Activated T-helper 1 cell treated with anti-CD3 and anti-CD28 coated beads, Interleukin-12 subunit alpha, Interleukin-12 subunit beta, Interleukin-2, Interleukin-4 antibody, amounts not matched to agents 30 ng/mL and 10 ng/mL and 1 ng/mL, durations not matched to agents 14 hours and 24 hours and 36 hours (primary cell): ENCODE measurements at regions of chr19 and their contacts with region 1.

Region 1: GRCh38 chr19:4328243-4328990 is 10.2 kb downstream of the STAP2 start:
- DNase-seq: peak; percentile 87
- H3K4me3 Mint-ChIP-seq: peak overlapping the region; percentile 84
- H3K27ac Mint-ChIP-seq: peak overlapping the region; percentile 90
- H3K4me1 Mint-ChIP-seq: peaks cover 15% of the 10 kb centered on the region
- H3K27me3 Mint-ChIP-seq: peaks cover 9% of the 10 kb centered on the region

Region 2: GRCh38 chr19:4294389-4294788 is 34.0 kb before region 1 on chr19:
- intact Hi-C with region 1: no loop called
- DNase-seq: no peak
- H3K4me3 Mint-ChIP-seq: no peak overlapping the region
- H3K27ac Mint-ChIP-seq: no peak overlapping the region
- H3K4me1 Mint-ChIP-seq: peaks cover 13% of the 10 kb centered on the region
- H3K27me3 Mint-ChIP-seq: no peaks in the 10 kb centered on the region

Region 3: GRCh38 chr19:4304530-4305252 is 23.7 kb before region 1 on chr19 and contains the start of gene FSD1:
- intact Hi-C with region 1: loop called (anchors 1 kb)
- DNase-seq: peak; percentile 76
- H3K4me3 Mint-ChIP-seq: peak within 1 kb of the TSS; percentile 81
- H3K27ac Mint-ChIP-seq: peak within 1 kb of the TSS; percentile 70
- H3K4me1 Mint-ChIP-seq: peaks cover 31% of the 10 kb centered on the region
- H3K27me3 Mint-ChIP-seq: no peaks in the 10 kb centered on the region
- total RNA-seq, gene FSD1: 39.1 and 46.5 TPM in 2 replicates

Region 4: DNA sequence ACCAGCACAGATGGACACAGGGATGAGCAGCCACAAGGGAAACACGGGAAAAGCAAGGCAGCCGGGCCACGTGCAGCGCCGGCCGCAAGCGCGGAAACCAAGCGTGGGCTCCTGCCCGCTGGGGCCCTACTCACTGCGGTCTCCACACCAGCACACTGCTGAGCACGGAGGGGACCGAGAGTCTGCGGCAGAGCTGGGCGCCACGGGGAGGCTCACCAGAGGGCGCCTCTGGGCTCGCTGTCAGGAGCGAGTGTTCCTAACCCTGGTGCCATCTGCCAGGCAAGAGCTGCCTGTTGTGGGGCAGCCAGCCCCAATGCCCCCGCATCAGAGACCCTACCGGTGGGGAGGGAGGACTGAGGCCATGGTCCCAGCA is 41.5 kb after region 1 on chr19:
- intact Hi-C with region 1: loop called (anchors 1 kb)
- DNase-seq: peak; percentile 67
- H3K4me3 Mint-ChIP-seq: peak overlapping the region; percentile 69
- H3K27ac Mint-ChIP-seq: peak overlapping the region; percentile 92
- H3K4me1 Mint-ChIP-seq: peaks cover 42% of the 10 kb centered on the region
- H3K27me3 Mint-ChIP-seq: no peaks in the 10 kb centered on the region

Region 5: GRCh38 chr19:4415352-4415751 is 86.9 kb after region 1 on chr19:
- intact Hi-C with region 1: no loop called
- DNase-seq: no peak
- H3K4me3 Mint-ChIP-seq: no peak overlapping the region
- H3K27ac Mint-ChIP-seq: no peak overlapping the region
- H3K4me1 Mint-ChIP-seq: no peaks in the 10 kb centered on the region
- H3K27me3 Mint-ChIP-seq: no peaks in the 10 kb centered on the region

Region 6: GRCh38 chr19:4457654-4458395 is 129.4 kb after region 1 on chr19 and contains the start of gene UBXN6:
- intact Hi-C with region 1: loop called (anchors 1 kb)
- DNase-seq: peak; percentile 98
- H3K4me3 Mint-ChIP-seq: peak within 1 kb of the TSS; percentile 92
- H3K27ac Mint-ChIP-seq: peak within 1 kb of the TSS; percentile 94
- H3K4me1 Mint-ChIP-seq: peaks cover 11% of the 10 kb centered on the region
- H3K27me3 Mint-ChIP-seq: peaks cover 2% of the 10 kb centered on the region
- total RNA-seq, gene UBXN6: 49.5 and 51.0 TPM in 2 replicates